ENCODE measurements at regions of chr7 and their contacts with region 1.

Region 1: DNA sequence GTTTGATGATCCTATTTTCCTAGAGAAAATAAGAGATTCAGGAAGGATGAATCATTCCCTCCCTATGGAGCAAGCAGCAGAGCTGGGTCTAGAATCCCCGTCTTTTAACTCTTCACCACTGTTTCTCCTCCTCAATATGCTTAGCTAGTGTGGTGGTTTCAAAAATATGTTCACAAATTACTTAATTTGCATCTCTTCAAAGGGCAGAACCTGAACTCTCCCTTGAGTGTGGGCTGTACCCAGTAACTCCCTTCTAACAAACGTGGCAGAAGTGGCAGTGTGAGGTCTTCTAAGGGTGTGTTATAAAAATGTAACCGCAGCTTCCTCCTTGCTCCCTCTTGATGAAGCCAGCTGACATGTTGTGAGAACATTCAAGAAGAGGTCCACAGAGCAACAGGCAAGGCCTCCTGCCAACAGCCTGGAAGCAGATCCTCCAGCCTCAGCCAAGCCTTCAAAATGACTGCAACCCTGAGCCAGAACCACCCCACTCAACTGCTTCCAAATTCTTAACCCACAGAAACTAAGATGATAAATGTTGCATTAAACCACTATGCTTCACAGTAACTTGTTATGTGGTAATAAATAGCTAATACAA is 36.6 kb downstream of the SRPK2 start:
- DNase-seq: no peak
- ATAC-seq: no peak
- H3K4me3 ChIP-seq: no peak overlapping the region
- H3K27ac ChIP-seq: no peak overlapping the region
- H3K4me1 ChIP-seq: peaks cover 5% of the 10 kb centered on the region; the same call in 1 of the 2 replicates
- H3K27me3 ChIP-seq: no peaks in the 10 kb centered on the region
- CTCF ChIP-seq: no peak

Region 2: DNA sequence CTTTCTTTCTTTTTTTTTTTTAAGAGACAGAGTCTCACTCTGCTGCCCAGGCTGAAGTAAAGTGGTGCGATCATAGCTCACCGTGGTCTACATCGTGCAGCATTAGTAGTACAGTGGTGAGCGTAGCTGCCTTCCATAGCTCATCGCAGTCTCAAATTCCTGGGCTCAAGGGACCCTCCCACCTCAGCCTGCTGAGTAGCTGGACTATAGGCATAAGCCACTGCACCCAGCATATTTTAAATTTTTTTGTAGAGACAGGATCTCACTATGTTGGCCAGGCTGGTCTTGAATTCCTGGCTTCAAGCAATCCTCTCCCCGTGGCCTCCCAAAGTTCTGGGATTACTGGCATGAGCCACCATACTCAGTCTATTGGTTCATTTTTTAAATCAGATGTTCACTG is 402.3 kb after region 1 on chr7:
- CTCF ChIA-PET with region 1: interaction called, 11 read pairs
- POLR2A ChIA-PET with region 1: no interaction called
- in situ Hi-C with region 1: no loop called
- intact Hi-C with region 1: no loop called
- DNase-seq: no peak
- ATAC-seq: no peak
- H3K4me3 ChIP-seq: no peak overlapping the region
- H3K27ac ChIP-seq: no peak overlapping the region
- H3K4me1 ChIP-seq: no peaks in the 10 kb centered on the region
- H3K27me3 ChIP-seq: no peaks in the 10 kb centered on the region
- CTCF ChIP-seq: no peak